Activated CD4-positive, alpha-beta T cell treated with anti-CD3 and anti-CD28 coated beads for 36 hours (primary cell): ENCODE measurements at regions of chr6 and their contacts with region 1.

Region 1: DNA sequence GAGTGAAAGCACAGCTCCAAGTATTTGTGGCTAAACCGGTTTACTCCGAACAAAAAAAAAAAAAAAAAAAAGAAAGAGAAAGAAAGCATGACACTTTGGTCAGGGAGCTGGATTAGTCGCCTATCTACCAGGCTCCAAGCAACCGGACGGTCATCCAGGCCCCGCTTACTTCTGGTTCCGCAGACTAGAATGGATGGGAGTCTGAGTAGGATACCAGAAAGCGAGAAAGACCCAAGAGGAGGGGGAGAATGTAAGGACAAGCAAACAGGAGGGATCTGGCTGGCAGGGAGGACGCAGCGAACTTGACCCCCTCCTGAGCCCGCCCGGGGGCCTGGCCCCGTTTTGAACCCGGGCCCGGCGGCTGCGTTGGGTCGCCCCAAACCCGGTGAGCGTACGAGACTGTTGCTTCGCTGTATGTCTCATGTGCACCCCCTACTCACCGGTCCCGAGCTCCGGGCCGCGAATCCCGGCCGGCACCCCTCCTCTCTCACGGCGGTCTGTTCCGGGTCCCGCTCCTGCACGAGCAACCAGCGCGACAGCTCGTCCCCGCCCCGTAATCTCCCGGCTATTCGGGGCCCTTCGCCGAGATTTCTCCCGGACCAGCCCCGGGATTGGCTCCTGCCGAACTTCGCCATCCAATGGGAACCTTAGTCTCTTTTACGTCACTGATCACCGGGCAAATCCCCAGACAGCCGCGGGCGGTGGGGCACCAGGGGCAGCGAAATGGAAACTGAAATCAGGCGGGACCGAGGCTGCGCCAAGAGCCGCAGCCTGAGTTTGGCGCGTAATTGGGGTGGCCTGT is at the start of gene TRIM26:
- DNase-seq: peak; percentile 98
- ATAC-seq: peak; percentile 90
- H3K4me3 Mint-ChIP-seq: peak within 1 kb of the TSS; percentile 89
- H3K27ac Mint-ChIP-seq: peak within 1 kb of the TSS; percentile 99
- H3K4me1 Mint-ChIP-seq: peaks cover 50% of the 10 kb centered on the region
- H3K27me3 Mint-ChIP-seq: no peaks in the 10 kb centered on the region
- total RNA-seq, gene TRIM26: 48.4 to 60.4 TPM

Region 2: GRCh38 chr6:30037182-30037788 is 175.8 kb before region 1 on chr6:
- CTCF ChIA-PET with region 1: no interaction called
- POLR2A ChIA-PET with region 1: no interaction called
- intact Hi-C with region 1: no loop called
- DNase-seq: no peak
- ATAC-seq: no peak
- H3K4me3 Mint-ChIP-seq: no peak overlapping the region
- H3K27ac Mint-ChIP-seq: no peak overlapping the region
- H3K4me1 Mint-ChIP-seq: no peaks in the 10 kb centered on the region
- H3K27me3 Mint-ChIP-seq: no peaks in the 10 kb centered on the region

Region 3: GRCh38 chr6:30061092-30061857 is 151.8 kb before region 1 on chr6 and contains the start of gene POLR1H:
- CTCF ChIA-PET with region 1: no interaction called
- POLR2A ChIA-PET with region 1: interaction called, 4 read pairs
- intact Hi-C with region 1: loop called (anchors 1 to 2 kb)
- DNase-seq: peak; percentile 92
- ATAC-seq: peak; percentile 88
- H3K4me3 Mint-ChIP-seq: peak within 1 kb of the TSS; percentile 94
- H3K27ac Mint-ChIP-seq: peak within 1 kb of the TSS; percentile 98
- H3K4me1 Mint-ChIP-seq: peaks cover 43% of the 10 kb centered on the region
- H3K27me3 Mint-ChIP-seq: no peaks in the 10 kb centered on the region
- total RNA-seq, gene POLR1H: 38.2 to 65.0 TPM

Region 4: DNA sequence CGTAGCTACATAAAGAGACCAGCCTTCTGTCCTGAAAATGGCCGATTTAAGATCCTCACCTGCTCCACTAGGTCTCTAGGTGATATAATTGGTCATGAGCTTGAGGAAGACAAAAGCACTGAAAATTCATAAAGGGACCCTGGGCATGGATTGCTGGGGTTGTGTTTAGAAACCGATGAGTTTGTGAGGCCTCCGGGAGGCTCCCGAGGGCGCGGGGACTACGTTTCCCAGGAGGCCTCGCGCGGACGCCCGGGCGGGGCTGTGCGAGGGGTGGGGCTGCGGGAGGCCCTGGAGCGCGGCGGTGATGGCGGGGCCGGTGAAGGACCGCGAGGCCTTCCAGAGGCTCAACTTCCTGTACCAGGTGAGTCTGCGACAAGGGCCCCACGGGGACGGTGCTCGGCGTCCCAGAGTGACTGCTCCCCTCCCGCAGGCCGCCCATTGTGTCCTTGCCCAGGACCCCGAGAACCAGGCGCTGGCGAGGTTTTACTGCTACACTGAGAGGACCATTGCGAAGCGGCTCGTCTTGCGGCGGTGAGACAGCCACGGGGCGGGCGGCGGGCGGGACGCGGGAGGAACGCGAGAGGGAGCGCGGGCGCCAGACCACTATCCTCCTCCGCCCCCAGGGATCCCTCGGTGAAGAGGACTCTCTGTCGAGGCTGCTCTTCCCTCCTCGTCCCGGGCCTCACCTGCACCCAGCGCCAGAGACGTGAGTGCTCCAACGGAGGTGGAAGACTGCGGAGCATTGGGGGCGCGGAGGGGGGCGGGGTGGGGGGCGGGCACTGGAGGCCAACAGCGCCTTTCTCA is 132.0 kb after region 1 on chr6 and contains the start of gene RPP21:
- CTCF ChIA-PET with region 1: no interaction called
- POLR2A ChIA-PET with region 1: no interaction called
- intact Hi-C with region 1: loop called (anchors 1 to 5 kb)
- DNase-seq: peak; percentile 94
- ATAC-seq: peak; percentile 96
- H3K4me3 Mint-ChIP-seq: peak within 1 kb of the TSS; percentile 85
- H3K27ac Mint-ChIP-seq: peak within 1 kb of the TSS; percentile 84
- H3K4me1 Mint-ChIP-seq: peaks cover 41% of the 10 kb centered on the region
- H3K27me3 Mint-ChIP-seq: peaks cover 2% of the 10 kb centered on the region
- total RNA-seq, gene RPP21: 32.6 to 38.1 TPM

Region 5: DNA sequence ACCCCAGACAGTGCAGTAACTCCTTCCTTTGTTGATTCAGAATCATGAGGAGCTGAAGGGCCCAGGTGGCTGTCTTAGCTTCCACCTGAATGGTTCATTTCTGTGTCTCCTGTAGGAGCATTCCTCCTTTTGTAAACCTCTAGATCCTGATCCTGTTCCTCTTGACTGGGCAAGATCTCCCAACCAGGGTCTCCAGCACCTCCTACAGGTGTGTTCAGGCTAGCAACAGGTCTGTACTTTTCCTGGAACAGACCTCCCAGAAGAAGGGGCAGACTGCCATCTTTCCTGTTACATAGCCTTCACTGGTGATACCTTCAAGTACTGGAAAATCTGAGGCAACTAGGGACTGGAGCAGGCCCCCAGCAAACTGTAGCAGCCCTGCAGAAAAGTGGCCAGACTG is 1108.8 kb after region 1 on chr6:
- CTCF ChIA-PET with region 1: no interaction called
- POLR2A ChIA-PET with region 1: no interaction called
- intact Hi-C with region 1: no loop called
- DNase-seq: peak; percentile 11
- ATAC-seq: no peak
- H3K4me3 Mint-ChIP-seq: no peak overlapping the region
- H3K27ac Mint-ChIP-seq: no peak overlapping the region
- H3K4me1 Mint-ChIP-seq: no peaks in the 10 kb centered on the region
- H3K27me3 Mint-ChIP-seq: peaks cover 28% of the 10 kb centered on the region